ENCODE measurements at regions of chr6 and their contacts with region 1.

Region 1: GRCh38 chr6:55069132-55069781 is 105.1 kb upstream of the HCRTR2 start:
- DNase-seq: no peak
- H3K4me3 ChIP-seq: no peak overlapping the region
- H3K27ac ChIP-seq: no peak overlapping the region
- H3K4me1 ChIP-seq: peaks cover 0 to 3% (median 0%) of the 10 kb centered on the region in 4 donors
- H3K27me3 ChIP-seq: no peaks in the 10 kb centered on the region
- CTCF ChIP-seq: peak; percentile 29 to 34

Region 2: DNA sequence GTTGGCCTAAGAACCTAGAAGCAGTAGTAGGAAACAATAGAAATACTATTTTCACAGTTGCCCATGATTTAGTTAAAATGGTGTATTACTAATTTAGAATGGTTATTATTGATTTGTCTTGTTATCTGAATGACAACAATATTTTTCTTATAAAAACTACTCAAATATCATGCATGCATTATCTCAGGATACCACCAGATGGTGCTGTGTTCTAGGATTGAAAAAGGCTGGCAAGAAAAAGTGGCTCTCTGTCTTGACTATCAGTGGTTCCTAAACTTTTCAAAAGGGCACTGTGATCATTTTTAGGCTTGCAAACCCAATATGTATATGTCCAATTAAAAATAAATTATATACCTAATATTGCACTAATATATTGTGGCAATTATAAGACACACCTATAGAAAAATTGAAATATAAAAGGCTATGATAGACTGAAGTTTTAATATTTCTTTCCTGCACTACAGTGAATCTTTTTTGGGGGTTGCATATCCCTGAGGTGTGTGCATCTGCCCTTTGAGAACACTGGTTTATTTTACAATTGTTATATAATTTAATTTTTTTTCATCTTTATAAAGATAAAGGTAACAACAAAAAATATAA is 1089.7 kb before region 1 on chr6:
- intact Hi-C with region 1: loop called (anchors 10 kb)
- DNase-seq: no peak
- H3K4me3 ChIP-seq: no peak overlapping the region
- H3K27ac ChIP-seq: no peak overlapping the region
- H3K4me1 ChIP-seq: no peaks in the 10 kb centered on the region
- H3K27me3 ChIP-seq: no peaks in the 10 kb centered on the region
- CTCF ChIP-seq: peak; percentile 64 to 83

Region 3: GRCh38 chr6:55198708-55199107 is 129.5 kb after region 1 on chr6:
- intact Hi-C with region 1: no loop called
- DNase-seq: no peak
- H3K4me3 ChIP-seq: no peak overlapping the region
- H3K27ac ChIP-seq: no peak overlapping the region
- H3K4me1 ChIP-seq: no peaks in the 10 kb centered on the region
- H3K27me3 ChIP-seq: no peaks in the 10 kb centered on the region
- CTCF ChIP-seq: no peak